GM12878 (cell line): ENCODE measurements at regions of chr7 and their contacts with region 1.

Region 1: GRCh38 chr7:7920481-7920880 is 48.1 kb upstream of the GLCCI1 start:
- DNase-seq: peak; percentile 76
- ATAC-seq: peak; percentile 93
- H3K4me3 ChIP-seq: no peak overlapping the region; the same call in 1 of the 2 replicates
- H3K27ac ChIP-seq: no peak overlapping the region; the same call in 1 of the 2 replicates
- H3K4me1 ChIP-seq: peaks cover 50% of the 10 kb centered on the region
- H3K27me3 ChIP-seq: no peaks in the 10 kb centered on the region
- CTCF ChIP-seq: no peak
- EP300 ChIP-seq: peak; percentile 82 to 91; a peak in 2 of 4 replicates
- POLR2A ChIP-seq: no peak
- RAD21 ChIP-seq: peak; percentile 11; the same call in 1 of the 2 replicates

Region 2: GRCh38 chr7:7201578-7202374 is 718.7 kb before region 1 on chr7:
- CTCF ChIA-PET with region 1: no interaction called
- POLR2A ChIA-PET with region 1: no interaction called
- RAD21 ChIA-PET with region 1: no interaction called
- SMC1A ChIA-PET with region 1: no interaction called
- in situ Hi-C with region 1: no loop called
- intact Hi-C with region 1: no loop called
- DNase-seq: peak; percentile 48
- ATAC-seq: peak; percentile 99
- H3K4me3 ChIP-seq: peak overlapping the region; percentile 59
- H3K27ac ChIP-seq: peak overlapping the region; percentile 54; the same call in 1 of the 2 replicates
- H3K4me1 ChIP-seq: peaks cover 16% of the 10 kb centered on the region
- H3K27me3 ChIP-seq: no peaks in the 10 kb centered on the region
- CTCF ChIP-seq: no peak
- EP300 ChIP-seq: no peak
- POLR2A ChIP-seq: no peak
- RAD21 ChIP-seq: 0 out of 2 replicates have a peak, but pooled peaks have one; percentile 7

Region 3: DNA sequence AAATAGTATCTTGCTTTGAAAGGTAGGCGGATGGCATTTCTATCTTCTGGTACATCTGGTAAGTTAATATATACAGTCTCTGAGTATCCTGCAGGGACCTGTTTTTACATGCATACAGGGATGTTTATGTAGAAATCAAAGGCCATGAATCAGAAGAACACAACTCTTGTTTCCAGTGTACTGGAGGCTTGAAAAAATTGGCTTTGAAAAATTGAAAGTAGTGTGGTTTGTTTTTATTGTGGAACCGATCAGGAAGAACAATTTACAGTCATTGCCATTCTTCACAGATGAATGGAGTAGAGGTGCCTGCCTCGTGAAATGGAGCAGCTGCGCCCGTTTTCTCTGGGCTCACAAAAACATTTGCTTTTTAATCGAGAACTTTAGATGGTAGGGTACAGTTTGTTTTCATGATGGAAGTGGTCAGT is 148.1 kb before region 1 on chr7:
- CTCF ChIA-PET with region 1: interaction called, 3 read pairs
- POLR2A ChIA-PET with region 1: no interaction called
- RAD21 ChIA-PET with region 1: interaction called, 13 read pairs
- SMC1A ChIA-PET with region 1: interaction called, 13 read pairs
- in situ Hi-C with region 1: no loop called
- intact Hi-C with region 1: no loop called
- DNase-seq: no peak
- ATAC-seq: peak; percentile 77
- H3K4me3 ChIP-seq: 0 out of 2 replicates have a peak overlapping the region, but pooled peaks have one; percentile 6
- H3K27ac ChIP-seq: no peak overlapping the region
- H3K4me1 ChIP-seq: peaks cover 18% of the 10 kb centered on the region
- H3K27me3 ChIP-seq: no peaks in the 10 kb centered on the region
- CTCF ChIP-seq: no peak
- EP300 ChIP-seq: no peak
- POLR2A ChIP-seq: no peak
- RAD21 ChIP-seq: no peak

Region 4: DNA sequence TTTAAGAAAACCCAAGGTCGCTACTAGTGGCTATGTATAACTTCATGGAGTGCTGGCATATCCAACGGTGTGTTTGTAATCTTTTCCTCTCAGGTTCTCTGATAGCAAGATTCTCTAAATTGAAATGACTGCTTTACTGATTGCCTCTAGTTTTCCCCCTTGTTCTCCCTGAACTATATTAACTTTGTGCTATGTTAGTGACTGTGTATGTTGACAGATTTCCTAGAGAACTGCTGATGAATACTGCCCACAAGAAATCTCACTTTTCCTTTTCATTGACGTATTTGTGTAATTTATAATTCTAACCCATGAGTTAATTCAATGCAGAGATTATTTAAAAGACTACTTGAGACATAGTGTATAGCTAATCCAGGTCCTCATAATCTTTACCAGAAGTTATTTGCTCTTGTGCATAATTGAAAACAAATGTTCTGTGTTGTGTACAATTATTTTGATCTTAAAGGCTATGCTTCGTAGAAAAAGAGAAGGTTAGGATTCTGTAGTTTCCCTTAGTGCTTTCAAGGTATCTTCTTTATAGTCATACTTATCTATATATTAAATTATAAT is 22.4 kb before region 1 on chr7:
- CTCF ChIA-PET with region 1: no interaction called
- POLR2A ChIA-PET with region 1: no interaction called
- RAD21 ChIA-PET with region 1: no interaction called
- SMC1A ChIA-PET with region 1: interaction called, 11 read pairs
- in situ Hi-C with region 1: no loop called
- intact Hi-C with region 1: no loop called
- DNase-seq: no peak
- ATAC-seq: no peak
- H3K4me3 ChIP-seq: no peak overlapping the region
- H3K27ac ChIP-seq: no peak overlapping the region
- H3K4me1 ChIP-seq: no peaks in the 10 kb centered on the region
- H3K27me3 ChIP-seq: no peaks in the 10 kb centered on the region
- CTCF ChIP-seq: no peak
- EP300 ChIP-seq: no peak
- POLR2A ChIP-seq: no peak
- RAD21 ChIP-seq: no peak

Region 5: DNA sequence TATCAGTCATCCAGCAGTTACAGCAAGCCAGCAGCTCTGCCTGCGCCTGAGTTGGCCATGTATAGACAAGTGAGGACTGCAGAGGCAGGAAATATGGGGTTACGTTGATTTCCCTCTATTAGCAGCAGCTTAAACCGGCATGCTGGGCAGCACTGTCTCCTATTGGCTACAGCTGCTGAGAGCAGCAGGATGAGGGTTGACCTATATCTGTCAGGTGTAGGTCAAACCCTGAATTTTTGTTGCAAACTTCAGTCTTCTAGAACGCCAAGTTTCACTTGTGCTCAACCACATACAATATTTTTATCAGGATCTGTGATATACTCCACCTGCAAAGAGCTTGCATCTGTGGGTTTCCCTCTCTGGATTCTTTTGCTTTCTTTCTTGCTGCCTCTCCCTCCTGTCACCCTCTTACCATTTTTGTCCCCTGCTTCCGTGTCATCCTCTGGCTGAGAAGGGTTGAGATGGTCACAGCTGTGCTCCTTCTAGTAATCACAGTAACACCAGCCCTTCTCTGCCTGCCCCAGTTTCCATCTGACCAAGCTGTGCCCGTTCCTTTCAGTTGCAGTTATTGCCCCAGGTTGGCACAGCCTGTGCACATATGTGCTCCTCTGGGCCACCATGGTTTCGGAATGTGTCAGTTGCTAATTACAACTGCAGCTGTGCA is 24.3 kb after region 1 on chr7:
- CTCF ChIA-PET with region 1: interaction called, 5 read pairs
- POLR2A ChIA-PET with region 1: interaction called, 7 read pairs
- RAD21 ChIA-PET with region 1: interaction called, 34 read pairs
- SMC1A ChIA-PET with region 1: interaction called, 46 read pairs
- in situ Hi-C with region 1: no loop called
- intact Hi-C with region 1: no loop called
- DNase-seq: peak; percentile 99
- ATAC-seq: peak; percentile 95
- H3K4me3 ChIP-seq: peak overlapping the region; percentile 52
- H3K27ac ChIP-seq: peak overlapping the region; percentile 78
- H3K4me1 ChIP-seq: peaks cover 15% of the 10 kb centered on the region
- H3K27me3 ChIP-seq: no peaks in the 10 kb centered on the region
- CTCF ChIP-seq: 0 out of 6 replicates have a peak, but pooled peaks of 1 of the 3 experiments have one; percentile 7
- EP300 ChIP-seq: peak; percentile 78 to 85
- POLR2A ChIP-seq: peak; percentile 54
- RAD21 ChIP-seq: peak; percentile 46

Region 6: GRCh38 chr7:7977774-7978173 is 57.3 kb after region 1 on chr7:
- CTCF ChIA-PET with region 1: no interaction called
- POLR2A ChIA-PET with region 1: interaction called, 4 read pairs
- RAD21 ChIA-PET with region 1: interaction called, 13 read pairs
- SMC1A ChIA-PET with region 1: interaction called, 18 read pairs
- in situ Hi-C with region 1: no loop called
- intact Hi-C with region 1: no loop called
- DNase-seq: no peak
- ATAC-seq: peak; percentile 4
- H3K4me3 ChIP-seq: peak overlapping the region; percentile 47; the same call in 1 of the 2 replicates
- H3K27ac ChIP-seq: peak overlapping the region; percentile 30; the same call in 1 of the 2 replicates
- H3K4me1 ChIP-seq: peaks cover 4% of the 10 kb centered on the region; the same call in 1 of the 2 replicates
- H3K27me3 ChIP-seq: no peaks in the 10 kb centered on the region
- CTCF ChIP-seq: no peak
- EP300 ChIP-seq: no peak
- POLR2A ChIP-seq: no peak
- RAD21 ChIP-seq: no peak